Right ventricle myocardium inferior (tissue), 1 donor: ENCODE measurements at regions of chr7 and their contacts with region 1.

Region 1: DNA sequence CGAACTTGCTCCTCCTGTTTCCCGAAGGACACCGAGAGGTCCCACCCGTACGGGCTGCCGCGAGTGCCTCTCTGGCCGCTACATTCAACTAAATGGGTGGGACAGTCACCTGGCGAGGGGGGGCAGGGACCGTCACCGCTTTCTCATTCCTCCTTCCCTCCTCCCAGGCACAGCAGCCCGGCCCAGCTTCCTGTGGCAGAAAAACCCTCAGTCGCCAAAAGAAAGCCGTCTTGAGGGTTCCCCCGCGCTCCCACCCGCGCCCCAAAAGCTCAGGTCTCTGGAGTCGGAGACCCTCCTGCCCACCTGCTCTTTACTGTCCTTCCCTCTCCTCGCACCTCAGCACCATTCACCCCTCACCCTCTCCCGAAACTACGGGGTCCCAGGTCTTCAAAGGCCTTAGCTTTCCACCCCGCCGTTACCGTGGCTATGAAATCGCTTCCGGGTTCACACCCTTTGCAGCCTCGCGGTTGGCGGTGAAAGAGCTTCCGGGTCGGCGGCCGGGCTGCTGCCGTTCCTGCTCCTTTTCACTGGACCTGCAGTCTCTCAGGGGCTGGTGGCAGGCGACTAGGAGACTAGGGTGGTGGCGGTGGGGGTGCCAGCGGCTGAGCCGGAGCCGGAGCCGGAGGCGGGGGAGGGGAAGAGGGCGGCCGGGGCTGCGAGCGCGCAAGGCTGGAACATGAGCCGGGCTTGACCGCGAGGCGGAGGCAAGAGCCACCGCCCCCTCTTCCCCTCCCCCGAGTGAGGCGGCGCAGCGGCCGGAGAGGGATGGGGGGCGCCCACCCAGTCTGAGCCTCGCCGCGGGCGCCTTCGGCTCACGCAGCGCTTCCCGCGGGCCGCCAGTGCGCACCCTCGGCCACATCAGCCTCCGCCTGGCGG is at the starts of genes ANKIB1 and KRIT1:
- DNase-seq: peak; percentile 94
- ATAC-seq: peak; percentile 92
- total RNA-seq, gene ANKIB1: 34.6 TPM
- total RNA-seq, gene KRIT1: 22.7 TPM

Region 2: GRCh38 chr7:92279396-92280031 is 33.8 kb after region 1 on chr7:
- intact Hi-C with region 1: loop called (anchors 5 kb)
- DNase-seq: no peak
- ATAC-seq: no peak

Region 3: GRCh38 chr7:93337052-93337451 is 1091.3 kb after region 1 on chr7:
- intact Hi-C with region 1: no loop called
- DNase-seq: no peak
- ATAC-seq: no peak